PC-9 (cell line): ENCODE measurements at regions of chr3 and their contacts with region 1.

Region 1: GRCh38 chr3:158313338-158313927 is 203.5 kb downstream of the RSRC1 start:
- DNase-seq: no peak
- H3K4me3 ChIP-seq: no peak overlapping the region
- H3K27ac ChIP-seq: no peak overlapping the region
- H3K4me1 ChIP-seq: no peaks in the 10 kb centered on the region
- H3K27me3 ChIP-seq: no peaks in the 10 kb centered on the region
- CTCF ChIP-seq: peak; percentile 79

Region 2: DNA sequence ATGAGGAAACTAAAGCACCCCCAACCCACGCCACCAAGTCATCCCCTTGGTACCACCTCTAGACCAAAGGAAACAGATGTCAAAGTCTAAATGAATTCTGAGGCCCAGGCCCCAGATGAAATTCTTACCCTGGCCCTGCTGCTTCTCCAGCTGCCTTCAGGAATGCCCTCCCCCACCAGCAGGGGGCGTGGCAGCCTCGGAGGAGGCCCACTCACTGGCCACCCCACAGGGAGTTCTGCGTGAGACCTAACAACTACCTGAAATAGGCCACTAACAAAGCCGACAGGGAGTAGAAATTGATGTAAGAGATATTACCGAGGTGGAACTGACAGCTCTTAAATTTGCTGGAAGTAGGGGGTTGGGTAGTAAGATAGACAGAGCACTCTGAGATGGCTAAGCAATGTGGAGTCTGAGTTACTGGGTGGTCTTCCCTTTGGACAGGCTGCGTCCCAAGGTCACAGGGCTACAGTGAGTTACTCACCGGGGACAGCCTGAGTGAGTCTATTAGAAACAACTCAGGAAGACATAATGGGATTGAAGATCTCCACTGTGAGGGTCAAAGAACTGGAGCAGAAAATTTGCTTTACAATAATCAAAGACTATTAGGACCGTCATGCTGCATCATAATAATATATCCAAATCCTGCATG is 448.0 kb before region 1 on chr3:
- CTCF ChIA-PET with region 1: no interaction called
- POLR2A ChIA-PET with region 1: no interaction called
- intact Hi-C with region 1: loop called (anchors 10 kb)
- DNase-seq: peak in 1 of 2 experiments; percentile 24
- H3K4me3 ChIP-seq: no peak overlapping the region
- H3K27ac ChIP-seq: no peak overlapping the region
- H3K4me1 ChIP-seq: no peaks in the 10 kb centered on the region
- H3K27me3 ChIP-seq: no peaks in the 10 kb centered on the region
- CTCF ChIP-seq: peak; percentile 78

Region 3: DNA sequence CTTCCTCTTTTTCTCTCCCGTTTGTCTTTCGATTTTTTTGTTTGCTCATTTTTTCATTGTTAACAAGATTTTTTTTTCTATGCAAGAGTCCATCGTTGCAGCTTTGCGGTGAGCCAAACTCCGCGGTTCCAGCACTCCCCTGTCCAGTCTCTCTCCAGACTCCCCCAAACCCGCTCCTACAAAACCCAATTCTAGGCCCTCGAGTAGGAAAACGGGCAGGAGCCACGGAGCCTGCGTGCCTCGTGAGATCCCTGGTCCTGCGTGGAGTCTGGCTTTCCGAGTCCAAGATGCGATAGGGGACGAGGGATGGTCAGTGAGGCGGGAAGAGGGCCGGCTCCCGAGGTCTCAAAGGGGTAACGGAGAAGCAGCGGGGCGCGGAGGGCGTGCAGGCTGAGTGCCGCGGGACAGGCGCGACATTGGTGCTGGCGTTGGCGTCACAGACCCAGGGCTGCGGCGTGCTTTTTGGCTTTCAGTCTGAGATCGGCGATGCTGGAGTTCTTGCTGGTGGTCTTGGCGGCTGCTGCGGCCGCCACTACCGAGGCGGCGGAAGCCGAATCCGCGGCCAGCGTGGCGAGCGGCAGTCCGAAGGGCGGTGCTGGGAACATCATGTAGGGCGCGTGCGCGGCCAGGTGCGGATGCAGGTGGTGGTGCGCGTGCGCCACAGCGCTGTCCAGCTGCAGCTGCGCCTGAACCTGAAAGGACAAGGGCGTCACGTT is 215.7 kb before region 1 on chr3:
- CTCF ChIA-PET with region 1: interaction called, 11 read pairs
- POLR2A ChIA-PET with region 1: no interaction called
- intact Hi-C with region 1: no loop called
- DNase-seq: peak; percentile 81 to 89
- H3K4me3 ChIP-seq: peak overlapping the region; percentile 80
- H3K27ac ChIP-seq: no peak overlapping the region
- H3K4me1 ChIP-seq: no peaks in the 10 kb centered on the region; the same call in 1 of the 2 replicates
- H3K27me3 ChIP-seq: no peaks in the 10 kb centered on the region
- CTCF ChIP-seq: no peak